PC-3 (cell line): ENCODE measurements at regions of chrX and their contacts with region 1.

Region 1: DNA sequence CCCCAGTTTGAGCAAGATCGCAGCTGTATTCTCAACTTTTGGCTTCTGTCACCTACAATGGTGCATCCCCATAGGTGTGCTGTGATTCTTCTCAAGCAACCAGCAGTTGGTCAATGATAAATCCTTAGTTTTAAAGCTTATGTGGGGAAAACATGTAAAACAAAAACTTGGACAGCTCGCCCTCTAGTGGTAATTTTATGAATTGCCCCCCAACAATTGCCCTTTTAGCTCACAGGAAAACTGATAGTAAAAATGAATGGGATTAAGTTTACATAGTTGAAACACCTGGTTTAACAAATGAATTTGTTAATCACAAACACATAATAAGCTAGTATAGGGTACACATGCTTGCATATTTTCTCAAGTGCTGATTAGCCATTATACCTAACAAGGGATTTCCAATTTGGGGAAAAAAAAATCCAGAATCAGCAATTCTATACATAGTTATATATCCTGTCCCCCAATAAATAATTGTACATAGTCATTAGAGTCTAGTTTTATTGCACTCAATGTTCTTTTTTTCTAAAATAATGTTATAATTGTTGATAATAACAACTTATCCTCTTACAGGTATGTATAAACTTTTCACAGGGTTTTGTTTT is 30.1 kb downstream of the TEX13A start:
- DNase-seq: peak; percentile 74
- ATAC-seq: no peak; the same call in 1 of the 2 replicates
- H3K4me3 ChIP-seq: no peak overlapping the region
- H3K27ac ChIP-seq: no peak overlapping the region
- H3K4me1 ChIP-seq: no peaks in the 10 kb centered on the region
- H3K27me3 ChIP-seq: no peaks in the 10 kb centered on the region
- CTCF ChIP-seq: peak; percentile 81

Region 2: GRCh38 chrX:104482757-104483156 is 707.6 kb before region 1 on chrX:
- CTCF ChIA-PET with region 1: no interaction called
- POLR2A ChIA-PET with region 1: no interaction called
- intact Hi-C with region 1: loop called (anchors 10 kb)
- DNase-seq: peak; percentile 15
- ATAC-seq: no peak
- H3K4me3 ChIP-seq: no peak overlapping the region
- H3K27ac ChIP-seq: no peak overlapping the region
- H3K4me1 ChIP-seq: no peaks in the 10 kb centered on the region
- H3K27me3 ChIP-seq: no peaks in the 10 kb centered on the region
- CTCF ChIP-seq: peak; percentile 58

Region 3: GRCh38 chrX:104668550-104668949 is 521.8 kb before region 1 on chrX:
- CTCF ChIA-PET with region 1: no interaction called
- POLR2A ChIA-PET with region 1: no interaction called
- intact Hi-C with region 1: loop called (anchors 5 kb)
- DNase-seq: peak; percentile 57
- ATAC-seq: peak; percentile 57; the same call in 1 of the 2 replicates
- H3K4me3 ChIP-seq: no peak overlapping the region
- H3K27ac ChIP-seq: no peak overlapping the region
- H3K4me1 ChIP-seq: no peaks in the 10 kb centered on the region
- H3K27me3 ChIP-seq: no peaks in the 10 kb centered on the region
- CTCF ChIP-seq: peak; percentile 63

Region 4: DNA sequence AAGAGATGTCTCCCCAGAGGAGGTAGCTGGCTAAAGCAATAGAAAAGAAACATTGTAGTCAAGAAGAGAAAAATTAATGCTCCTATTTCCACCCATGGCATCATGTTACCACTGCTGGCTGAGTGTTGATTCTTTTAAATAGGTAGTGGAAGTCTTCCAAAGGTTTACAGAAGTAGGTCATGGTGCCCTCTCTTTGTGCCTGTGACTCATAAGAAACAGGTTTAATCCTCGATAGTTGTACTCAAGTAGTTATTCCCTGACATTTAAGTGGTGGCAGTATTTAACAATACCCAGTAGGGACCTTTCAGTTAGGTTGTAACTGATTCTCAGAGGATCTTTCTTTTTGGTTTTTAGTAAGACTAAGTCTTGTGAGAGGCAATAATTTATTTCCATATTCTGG is 217.6 kb before region 1 on chrX:
- CTCF ChIA-PET with region 1: no interaction called
- POLR2A ChIA-PET with region 1: no interaction called
- intact Hi-C with region 1: loop called (anchors 2 kb)
- DNase-seq: peak; percentile 85
- ATAC-seq: peak; percentile 98
- H3K4me3 ChIP-seq: no peak overlapping the region
- H3K27ac ChIP-seq: no peak overlapping the region
- H3K4me1 ChIP-seq: peaks cover 21% of the 10 kb centered on the region
- H3K27me3 ChIP-seq: no peaks in the 10 kb centered on the region
- CTCF ChIP-seq: no peak; the same call in 1 of the 2 replicates

Region 5: GRCh38 chrX:105052926-105053325 is 137.4 kb before region 1 on chrX:
- CTCF ChIA-PET with region 1: no interaction called
- POLR2A ChIA-PET with region 1: no interaction called
- intact Hi-C with region 1: no loop called
- DNase-seq: no peak
- ATAC-seq: no peak
- H3K4me3 ChIP-seq: no peak overlapping the region
- H3K27ac ChIP-seq: no peak overlapping the region
- H3K4me1 ChIP-seq: no peaks in the 10 kb centered on the region
- H3K27me3 ChIP-seq: no peaks in the 10 kb centered on the region
- CTCF ChIP-seq: no peak

Region 6: DNA sequence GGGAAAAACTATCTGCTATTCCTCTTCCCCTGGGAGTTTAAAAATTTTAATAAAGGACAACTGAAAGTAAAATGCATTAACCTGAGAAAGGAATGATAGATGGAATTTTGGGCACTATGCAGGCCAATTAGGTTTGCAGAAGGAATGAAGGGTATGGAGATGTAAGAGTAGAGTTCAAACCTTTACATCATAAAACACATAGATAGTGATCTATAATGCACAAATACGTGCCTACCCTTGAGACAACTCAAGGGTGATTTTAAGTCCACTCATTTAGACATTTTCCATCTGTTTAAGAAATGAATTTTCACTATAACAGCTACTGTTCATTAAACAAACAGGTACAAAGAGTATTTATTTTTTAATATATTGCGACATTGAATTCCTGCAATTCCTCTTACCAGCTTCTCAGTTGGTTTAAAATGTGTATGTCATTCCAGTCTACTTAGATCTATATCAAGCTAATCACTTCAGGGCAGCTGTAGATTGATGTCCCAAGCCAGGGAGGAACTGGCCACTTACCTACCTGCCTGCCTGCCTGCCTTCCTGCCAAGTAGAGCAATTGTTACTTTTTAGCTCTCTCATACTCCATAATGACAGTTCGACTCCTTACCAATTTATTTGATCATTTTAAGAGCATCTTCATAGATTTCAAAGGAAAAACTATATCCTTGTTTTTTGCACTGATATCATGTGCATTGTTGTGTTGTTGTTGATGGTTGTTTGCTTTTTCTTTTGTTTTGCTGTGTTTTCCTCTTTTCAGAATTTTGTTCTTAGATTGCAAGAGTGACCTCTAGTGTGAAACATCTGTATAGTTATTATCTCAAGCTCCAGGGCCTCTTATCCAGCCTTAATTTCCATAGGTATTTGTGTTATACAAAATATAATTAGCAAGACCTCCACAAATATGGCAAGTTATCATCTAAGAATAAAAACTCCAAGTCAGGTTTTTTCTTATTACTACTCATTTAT is 511.0 kb after region 1 on chrX:
- CTCF ChIA-PET with region 1: interaction called, 8 read pairs
- POLR2A ChIA-PET with region 1: no interaction called
- intact Hi-C with region 1: loop called (anchors 2 kb)
- DNase-seq: peak; percentile 62
- ATAC-seq: peak; percentile 65
- H3K4me3 ChIP-seq: no peak overlapping the region
- H3K27ac ChIP-seq: no peak overlapping the region
- H3K4me1 ChIP-seq: peaks cover 24% of the 10 kb centered on the region
- H3K27me3 ChIP-seq: no peaks in the 10 kb centered on the region
- CTCF ChIP-seq: peak; percentile 75